GM13976 (cell line): ENCODE measurements at regions of chr3 and their contacts with region 1.

Region 1: GRCh38 chr3:112498914-112499711 is at the start of gene BTLA:
- DNase-seq: no peak
- CTCF ChIP-seq: no peak

Region 2: DNA sequence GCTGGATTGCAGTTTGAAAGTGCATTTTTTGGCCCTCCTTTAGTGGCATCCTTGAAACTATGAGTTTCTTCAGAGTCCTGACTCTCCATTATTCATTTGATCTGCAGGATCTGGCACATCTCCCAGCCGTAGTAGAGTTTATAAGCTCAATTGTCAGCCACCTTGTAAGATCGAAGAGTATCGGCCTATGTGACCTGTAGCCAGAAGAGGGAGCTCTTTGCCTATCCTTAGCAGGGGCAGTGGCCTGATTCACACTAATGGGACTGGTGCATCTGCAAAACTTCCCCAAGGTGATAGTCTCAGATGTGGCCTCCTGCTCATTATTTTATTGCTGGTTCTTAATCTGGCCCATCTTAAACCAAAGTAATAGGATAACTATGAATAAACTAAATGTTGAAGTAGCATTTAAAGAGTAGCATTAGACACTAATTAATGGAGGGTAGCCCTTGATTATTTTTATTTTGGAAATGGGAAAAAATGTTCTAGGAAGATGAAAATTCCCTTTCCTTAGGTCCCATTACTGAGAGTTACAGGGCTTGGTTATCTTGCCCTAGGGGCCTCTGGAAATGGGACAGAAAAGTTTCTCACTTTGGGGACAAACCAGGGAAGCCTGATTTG is 387.2 kb before region 1 on chr3:
- in situ Hi-C with region 1: loop called (anchors 10 kb)
- DNase-seq: peak; percentile 66
- CTCF ChIP-seq: peak; percentile 91

Region 3: GRCh38 chr3:112642912-112643506 is 143.9 kb after region 1 on chr3:
- in situ Hi-C with region 1: no loop called
- DNase-seq: peak; percentile 81
- CTCF ChIP-seq: peak; percentile 70